Activated T-helper 1 cell treated with anti-CD3 and anti-CD28 coated beads, Interleukin-12 subunit alpha, Interleukin-12 subunit beta, Interleukin-2, Interleukin-4 antibody, amounts not matched to agents 30 ng/mL and 10 ng/mL and 1 ng/mL, durations not matched to agents 14 hours and 24 hours and 36 hours (primary cell): ENCODE measurements at regions of chr5 and their contacts with region 1.

Region 1: GRCh38 chr5:55600497-55601203 is 65.9 kb upstream of the PLPP1 start:
- DNase-seq: no peak
- H3K4me3 Mint-ChIP-seq: peak overlapping the region; percentile 64
- H3K27ac Mint-ChIP-seq: peak overlapping the region; percentile 36
- H3K4me1 Mint-ChIP-seq: peaks cover 40% of the 10 kb centered on the region
- H3K27me3 Mint-ChIP-seq: no peaks in the 10 kb centered on the region

Region 2: GRCh38 chr5:55636683-55637082 is 36.0 kb after region 1 on chr5:
- intact Hi-C with region 1: loop called (anchors 5 kb)
- DNase-seq: no peak
- H3K4me3 Mint-ChIP-seq: no peak overlapping the region
- H3K27ac Mint-ChIP-seq: no peak overlapping the region
- H3K4me1 Mint-ChIP-seq: peaks cover 16% of the 10 kb centered on the region
- H3K27me3 Mint-ChIP-seq: no peaks in the 10 kb centered on the region